ENCODE measurements at regions of chr7 and their contacts with region 1.

Region 1: DNA sequence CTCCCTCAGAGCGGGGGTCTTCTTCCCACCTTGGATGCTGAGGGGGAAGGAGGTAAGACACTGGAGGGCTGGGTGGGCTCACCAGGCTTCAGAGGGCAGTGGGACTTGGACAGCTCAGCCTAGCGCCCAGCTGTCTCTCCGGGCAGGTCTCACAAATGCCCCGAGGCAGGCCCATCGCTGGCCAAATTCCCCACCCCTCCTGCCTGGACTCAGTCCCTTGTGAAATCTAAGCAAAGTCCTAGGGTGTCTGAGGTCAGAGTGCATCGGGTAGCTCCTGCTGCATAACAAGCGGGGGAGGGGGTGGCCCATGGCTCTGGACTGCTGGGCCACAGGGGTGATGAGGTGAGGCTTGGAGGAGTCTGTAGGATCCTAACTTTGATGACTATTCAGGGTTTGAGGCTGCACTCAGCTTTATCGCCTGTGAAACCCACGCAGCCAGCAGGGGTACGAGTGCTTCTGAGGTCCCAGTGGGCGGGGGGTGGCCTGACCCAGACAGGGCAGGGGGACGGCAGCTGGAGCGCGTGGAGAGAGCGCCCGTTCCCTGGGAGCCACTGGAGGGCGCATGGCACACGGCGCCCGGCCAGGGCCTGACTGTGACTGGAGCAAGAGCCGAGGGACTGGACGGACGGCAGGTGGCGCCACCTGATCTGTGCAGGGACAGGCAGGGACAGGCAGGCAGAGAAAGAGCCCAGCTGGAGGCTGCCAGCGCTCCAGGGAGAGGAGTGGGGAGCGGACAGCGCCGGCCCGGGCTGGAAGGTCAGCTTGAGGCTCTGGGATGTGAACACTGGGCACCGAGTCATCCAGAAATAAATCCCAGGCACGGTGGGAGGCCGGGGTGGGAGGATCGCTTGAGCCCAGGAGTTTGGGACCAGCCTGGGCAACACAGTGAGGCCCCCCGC is 10.0 kb downstream of the CYP2W1 start:
- DNase-seq: peak; percentile 97 to 99 (median 98)
- H3K4me3 ChIP-seq: no peak overlapping the region
- H3K27ac ChIP-seq: peak overlapping the region in 1 of 2 donors; percentile 32
- H3K4me1 ChIP-seq: peaks cover 0 to 5% (median 0%) of the 10 kb centered on the region in 3 donors
- H3K27me3 ChIP-seq: no peaks in the 10 kb centered on the region
- CTCF ChIP-seq: peak; percentile 100

Region 2: DNA sequence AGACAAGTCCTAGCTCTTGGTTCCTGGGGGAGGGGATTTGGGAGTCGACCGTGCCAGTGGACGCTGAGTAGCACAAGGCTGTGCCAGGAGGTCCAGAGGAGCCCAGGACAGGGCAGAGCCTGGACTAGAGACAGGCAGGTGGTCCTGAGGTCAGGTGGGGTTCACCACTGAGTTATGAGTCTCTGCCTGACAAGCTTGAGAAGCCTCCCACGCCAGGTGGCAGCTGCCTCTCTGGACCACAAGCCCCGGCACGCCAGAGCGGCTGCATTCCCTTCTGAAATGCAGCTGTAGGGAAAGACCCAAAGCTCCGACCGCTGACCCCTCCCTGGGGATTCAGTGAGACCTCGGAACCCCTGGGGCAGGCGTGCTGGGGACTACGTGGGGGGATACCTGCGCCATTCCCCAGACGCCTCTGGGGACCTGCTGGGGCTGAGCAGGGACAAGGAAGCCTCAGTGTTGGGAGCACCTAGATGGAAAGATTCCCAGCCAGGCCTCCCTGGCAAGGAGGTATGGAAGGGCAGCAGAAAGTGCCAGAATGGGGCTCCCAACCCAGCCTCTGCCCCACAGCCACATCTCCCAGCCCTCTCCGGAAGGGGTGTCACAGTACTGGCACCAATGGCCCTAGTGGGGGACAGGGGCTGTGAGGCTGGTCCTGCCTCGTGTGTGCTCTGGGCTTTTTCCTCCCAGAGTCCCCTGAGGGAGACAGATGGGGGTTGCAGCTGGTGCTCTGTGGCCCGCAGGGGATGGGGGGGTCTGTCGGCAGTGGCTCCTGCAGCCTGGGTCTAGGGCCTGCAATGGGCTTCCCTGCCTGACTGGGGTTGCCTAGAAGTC is 502.3 kb before region 1 on chr7:
- intact Hi-C with region 1: no loop called
- DNase-seq: peak; percentile 63 to 80 (median 76)
- H3K4me3 ChIP-seq: no peak overlapping the region
- H3K27ac ChIP-seq: no peak overlapping the region
- H3K4me1 ChIP-seq: peaks cover 0 to 5% (median 0%) of the 10 kb centered on the region in 3 donors
- H3K27me3 ChIP-seq: no peaks in the 10 kb centered on the region
- CTCF ChIP-seq: no peak

Region 3: DNA sequence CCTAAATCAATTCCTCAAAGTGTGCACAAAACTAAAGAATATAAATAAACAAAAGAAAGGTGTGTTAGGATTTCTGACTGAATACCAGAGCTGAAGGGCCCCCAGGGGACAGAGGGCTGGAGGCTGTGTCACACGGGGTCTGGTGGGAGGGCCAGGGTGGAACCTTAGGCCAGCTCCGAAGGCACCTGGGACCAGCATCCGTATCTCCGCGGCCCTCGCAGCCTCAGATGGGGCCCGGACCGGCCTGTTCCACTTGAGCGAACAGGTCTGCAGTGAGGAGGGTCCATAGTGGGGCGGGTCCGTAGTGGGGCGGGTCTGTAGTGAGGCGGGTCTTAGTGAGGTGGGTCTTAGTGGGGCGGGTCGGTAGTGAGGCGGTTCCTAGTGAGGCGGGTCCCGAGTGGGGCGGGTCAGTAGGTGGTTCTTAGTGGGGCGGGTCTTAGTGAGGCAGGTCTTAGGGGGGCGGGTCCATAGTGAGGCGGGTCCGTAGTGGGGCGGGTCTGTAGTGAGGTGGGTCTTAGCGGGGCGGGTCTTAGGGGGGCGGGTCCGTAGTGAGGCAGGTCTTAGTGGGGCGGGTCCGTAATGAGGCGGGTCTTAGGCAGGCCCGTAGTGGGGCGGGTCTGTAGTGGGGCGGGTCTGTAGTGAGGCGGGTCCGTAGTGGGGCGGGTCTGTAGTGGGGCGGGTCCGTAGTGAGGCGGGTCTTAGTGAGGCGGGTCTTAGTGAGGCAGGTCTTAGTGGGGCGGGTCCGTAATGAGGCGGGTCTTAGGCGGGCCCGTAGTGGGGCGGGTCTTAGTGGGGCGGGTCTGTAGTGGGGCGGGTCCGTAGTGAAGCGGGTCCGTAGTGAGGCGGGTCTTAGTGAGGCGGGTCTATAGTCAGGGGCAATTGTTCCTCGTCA is 66.5 kb after region 1 on chr7:
- intact Hi-C with region 1: loop called (anchors 5 kb)
- DNase-seq: peak; percentile 71 to 96 (median 81)
- H3K4me3 ChIP-seq: peak overlapping the region in 1 of 3 donors; percentile 26
- H3K27ac ChIP-seq: peak overlapping the region in 1 of 2 donors; percentile 63
- H3K4me1 ChIP-seq: peaks cover 0 to 24% (median 11%) of the 10 kb centered on the region in 3 donors
- H3K27me3 ChIP-seq: no peaks in the 10 kb centered on the region
- CTCF ChIP-seq: no peak

Region 4: DNA sequence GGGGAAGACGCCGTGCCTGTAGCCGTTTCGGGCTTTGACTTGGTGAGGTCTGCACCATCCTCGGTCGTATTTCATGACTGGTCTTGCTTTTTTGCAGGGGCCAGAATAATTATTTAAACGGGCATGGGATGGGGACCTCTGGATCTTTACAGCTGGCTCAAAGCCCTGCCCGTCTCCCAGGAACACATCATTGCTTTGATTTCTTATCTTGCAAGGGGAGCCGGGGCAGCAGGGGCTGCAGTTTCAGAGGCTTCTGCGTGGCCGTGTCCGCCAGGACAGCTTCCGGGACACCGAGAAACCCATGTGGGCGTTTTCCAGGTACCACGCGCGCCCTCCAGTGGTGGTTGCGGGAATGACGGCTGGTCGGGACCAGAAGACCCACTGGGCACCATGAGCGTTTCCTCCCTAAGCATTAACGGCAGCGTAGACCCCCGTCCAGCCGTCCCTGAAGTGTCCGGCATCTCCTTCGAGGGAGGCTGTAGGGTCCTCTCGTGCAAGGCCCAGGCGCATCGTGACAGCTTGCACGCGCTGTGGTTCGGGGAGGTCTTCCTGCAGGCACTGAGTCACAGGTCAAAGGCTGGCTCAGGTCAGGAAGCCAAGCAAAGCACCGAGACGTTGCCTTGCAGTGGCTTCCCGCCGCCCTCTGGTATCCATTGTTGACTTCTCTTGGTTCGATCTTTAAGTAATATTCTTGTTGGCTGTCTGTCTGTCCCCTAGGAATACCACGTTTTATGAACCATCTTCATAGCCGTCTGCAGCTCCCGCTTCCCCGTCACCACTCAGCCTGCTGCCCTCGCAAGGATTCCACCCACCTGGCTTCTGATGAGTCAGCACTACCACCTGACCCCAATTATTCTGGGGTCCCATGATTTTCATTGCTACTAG is 183.3 kb after region 1 on chr7:
- intact Hi-C with region 1: loop called (anchors 10 kb)
- DNase-seq: peak; percentile 83 to 92 (median 89)
- H3K4me3 ChIP-seq: peak overlapping the region in 1 of 3 donors; percentile 49
- H3K27ac ChIP-seq: no peak overlapping the region
- H3K4me1 ChIP-seq: peaks cover 0 to 3% (median 3%) of the 10 kb centered on the region in 3 donors
- H3K27me3 ChIP-seq: no peaks in the 10 kb centered on the region
- CTCF ChIP-seq: peak; percentile 88